Endothelial cell of umbilical vein (primary cell): ENCODE measurements at regions of chr3 and their contacts with region 1.

Region 1: GRCh38 chr3:131454501-131454900 is 48.3 kb downstream of the MRPL3 start:
- DNase-seq: no peak
- H3K4me3 ChIP-seq: no peak overlapping the region
- H3K27ac ChIP-seq: no peak overlapping the region
- H3K4me1 ChIP-seq: no peaks in the 10 kb centered on the region
- H3K27me3 ChIP-seq: no peaks in the 10 kb centered on the region
- CTCF ChIP-seq: no peak
- POLR2A ChIP-seq: no peak

Region 2: DNA sequence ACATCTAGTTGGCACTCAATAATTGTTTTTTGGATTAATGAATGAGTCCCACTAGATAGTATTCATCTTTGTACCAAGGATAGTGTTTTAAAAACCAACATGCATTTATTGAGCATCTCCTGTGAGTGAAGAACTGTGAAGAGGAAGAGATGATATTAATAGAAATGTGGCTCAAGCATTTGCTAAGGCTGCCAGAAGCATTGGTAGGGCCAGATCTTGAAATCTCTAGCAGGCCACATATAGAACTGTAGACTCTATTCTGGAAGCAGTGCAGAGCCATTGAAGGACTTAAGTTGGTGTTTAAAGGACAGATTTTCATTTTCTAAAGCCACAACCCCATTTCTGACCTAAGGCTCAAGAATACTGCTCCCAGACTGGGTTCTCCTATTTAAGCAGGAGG is 328.8 kb before region 1 on chr3:
- CTCF ChIA-PET with region 1: no interaction called
- POLR2A ChIA-PET with region 1: no interaction called
- dilution Hi-C with region 1: no loop called
- intact Hi-C with region 1: no loop called
- DNase-seq: no peak
- H3K4me3 ChIP-seq: no peak overlapping the region
- H3K27ac ChIP-seq: no peak overlapping the region
- H3K4me1 ChIP-seq: no peaks in the 10 kb centered on the region
- H3K27me3 ChIP-seq: no peaks in the 10 kb centered on the region
- CTCF ChIP-seq: no peak
- POLR2A ChIP-seq: no peak

Region 3: DNA sequence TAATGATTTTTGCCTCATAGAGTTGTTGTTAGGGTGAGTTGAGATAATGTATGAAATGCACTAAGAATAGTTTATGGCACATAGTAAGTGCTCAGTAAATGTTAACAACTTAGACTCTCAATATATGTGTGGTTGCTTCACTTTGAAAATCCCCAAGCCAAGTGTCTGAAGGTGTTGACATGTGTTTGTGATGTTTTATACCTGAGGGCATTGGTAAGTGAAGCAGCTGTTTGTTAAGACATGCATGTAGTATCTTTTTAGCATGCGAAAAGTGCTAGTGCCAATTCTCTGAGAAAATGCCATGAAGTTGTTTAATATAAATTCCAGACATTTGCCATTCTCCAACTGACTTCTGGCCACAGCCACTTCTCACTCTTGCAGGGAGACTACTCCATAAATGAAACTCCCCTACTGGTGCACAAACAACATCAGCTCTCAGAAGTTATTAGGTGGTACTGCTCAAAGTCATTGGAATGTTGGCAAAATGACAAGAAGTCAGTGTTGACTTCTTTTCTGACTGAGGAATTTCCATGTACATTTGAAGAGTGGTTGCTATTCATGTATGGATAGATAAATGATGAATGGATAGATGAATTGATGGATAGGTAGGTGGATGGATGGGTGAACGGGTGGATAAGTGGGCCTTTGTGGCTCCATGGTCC is 176.5 kb before region 1 on chr3:
- CTCF ChIA-PET with region 1: no interaction called
- POLR2A ChIA-PET with region 1: no interaction called
- dilution Hi-C with region 1: no loop called
- intact Hi-C with region 1: loop called (anchors 5 kb)
- DNase-seq: peak; percentile 6
- H3K4me3 ChIP-seq: no peak overlapping the region
- H3K27ac ChIP-seq: no peak overlapping the region
- H3K4me1 ChIP-seq: no peaks in the 10 kb centered on the region
- H3K27me3 ChIP-seq: peaks cover 0 to under 1% of the 10 kb centered on the region in 2 experiments
- CTCF ChIP-seq: no peak
- POLR2A ChIP-seq: no peak